Activated T-helper 1 cell treated with anti-CD3 and anti-CD28 coated beads, Interleukin-12 subunit alpha, Interleukin-12 subunit beta, Interleukin-2, Interleukin-4 antibody, amounts not matched to agents 30 ng/mL and 10 ng/mL and 1 ng/mL, durations not matched to agents 14 hours and 24 hours and 36 hours (primary cell): ENCODE measurements at regions of chr6 and their contacts with region 1.

Region 1: DNA sequence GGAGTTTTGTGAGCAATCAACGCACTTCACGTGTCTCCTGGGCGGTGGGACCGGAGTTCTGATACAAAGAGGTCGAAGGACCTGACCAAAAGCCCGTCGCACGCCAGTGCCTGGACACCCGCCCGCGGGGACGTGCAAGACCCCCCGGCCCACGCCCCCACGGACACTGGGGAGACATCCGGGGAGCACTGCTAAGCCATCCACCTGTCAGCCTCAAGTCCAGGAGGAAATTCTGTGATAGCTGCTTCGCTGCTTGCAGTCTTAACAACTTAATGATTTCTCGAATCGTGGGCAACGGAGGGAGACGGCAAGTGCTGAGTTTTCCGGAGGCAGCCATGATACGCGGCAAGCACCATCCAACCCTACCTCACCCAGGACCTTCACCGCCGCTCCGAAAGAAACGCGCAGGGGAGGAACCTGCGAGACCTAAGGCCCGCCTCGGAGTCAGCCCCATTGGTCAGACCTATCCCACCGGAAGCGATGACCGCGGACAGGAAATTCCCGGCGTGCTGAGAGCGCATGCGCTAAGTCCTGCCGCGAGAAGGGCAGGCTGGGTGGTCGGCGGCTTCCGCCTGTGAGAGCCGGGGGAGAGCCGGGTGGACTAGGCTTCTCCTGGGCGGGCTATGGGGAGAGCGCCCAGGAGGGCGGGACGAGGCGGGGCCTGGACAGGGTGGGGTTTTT is at the start of gene TFB1M:
- DNase-seq: peak; percentile 99
- H3K4me3 Mint-ChIP-seq: peak within 1 kb of the TSS; percentile 98
- H3K27ac Mint-ChIP-seq: peak within 1 kb of the TSS; percentile 97
- H3K4me1 Mint-ChIP-seq: peaks cover 44% of the 10 kb centered on the region
- H3K27me3 Mint-ChIP-seq: no peaks in the 10 kb centered on the region
- total RNA-seq, gene TFB1M: 27.7 and 31.2 TPM in 2 replicates

Region 2: GRCh38 chr6:154675602-154676088 is 638.6 kb before region 1 on chr6:
- intact Hi-C with region 1: loop called (anchors 5 kb)
- DNase-seq: peak; percentile 77
- H3K4me3 Mint-ChIP-seq: no peak overlapping the region
- H3K27ac Mint-ChIP-seq: no peak overlapping the region
- H3K4me1 Mint-ChIP-seq: no peaks in the 10 kb centered on the region
- H3K27me3 Mint-ChIP-seq: peaks cover 4% of the 10 kb centered on the region

Region 3: DNA sequence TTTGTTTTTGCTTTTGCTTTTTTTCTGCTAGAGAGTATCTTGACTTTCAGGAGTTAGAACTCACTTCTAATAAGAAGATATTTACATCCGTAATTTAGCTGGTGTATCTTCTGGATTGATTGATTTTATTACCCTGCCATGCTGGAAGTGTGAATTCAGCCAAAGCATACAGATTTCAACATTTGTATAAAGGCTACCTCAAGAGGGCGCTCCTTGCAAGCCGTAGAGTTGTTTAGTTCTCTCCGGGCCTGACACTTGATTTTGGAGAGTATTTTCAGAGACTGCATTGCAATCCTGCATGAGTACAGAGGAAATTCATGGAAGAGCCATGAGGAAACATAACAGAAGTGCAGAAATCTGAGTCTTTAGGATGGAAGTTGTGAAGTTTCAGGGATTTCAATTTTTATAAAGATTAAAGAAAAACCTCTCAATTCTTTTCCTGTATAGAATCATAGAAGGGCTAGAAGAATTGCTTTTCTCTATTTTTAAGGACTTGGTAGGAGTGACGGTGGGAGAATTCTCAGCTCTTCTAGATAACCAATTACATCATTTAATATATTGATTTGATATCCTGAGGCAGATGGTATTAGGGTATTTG is 385.8 kb before region 1 on chr6:
- intact Hi-C with region 1: loop called (anchors 1 kb)
- DNase-seq: peak; percentile 52
- H3K4me3 Mint-ChIP-seq: no peak overlapping the region
- H3K27ac Mint-ChIP-seq: peak overlapping the region; percentile 12
- H3K4me1 Mint-ChIP-seq: peaks cover 21% of the 10 kb centered on the region
- H3K27me3 Mint-ChIP-seq: no peaks in the 10 kb centered on the region

Region 4: GRCh38 chr6:155223646-155224451 is 90.4 kb before region 1 on chr6:
- intact Hi-C with region 1: loop called (anchors 1 kb)
- DNase-seq: peak; percentile 65
- H3K4me3 Mint-ChIP-seq: peak overlapping the region; percentile 70
- H3K27ac Mint-ChIP-seq: peak overlapping the region; percentile 91
- H3K4me1 Mint-ChIP-seq: peaks cover 34% of the 10 kb centered on the region
- H3K27me3 Mint-ChIP-seq: peaks cover 2% of the 10 kb centered on the region

Region 5: GRCh38 chr6:156776840-156777576 is 1462.8 kb after region 1 on chr6 and contains the start of gene ARID1B:
- intact Hi-C with region 1: loop called (anchors 1 kb)
- DNase-seq: peak; percentile 75
- H3K4me3 Mint-ChIP-seq: peak within 1 kb of the TSS; percentile 97
- H3K27ac Mint-ChIP-seq: peak within 1 kb of the TSS; percentile 98
- H3K4me1 Mint-ChIP-seq: peaks cover 52% of the 10 kb centered on the region
- H3K27me3 Mint-ChIP-seq: peaks cover 3% of the 10 kb centered on the region
- total RNA-seq, gene ARID1B: 73.6 and 79.1 TPM in 2 replicates